HepG2 (cell line): ENCODE measurements at regions of chr16 and their contacts with region 1.

Region 1: GRCh38 chr16:20409398-20410120 is at the start of gene ACSM5:
- DNase-seq: peak; percentile 62
- ATAC-seq: peak; percentile 93
- H3K4me3 ChIP-seq: peak within 1 kb of the TSS; percentile 47 to 51 (median 50)
- H3K27ac ChIP-seq: peak within 1 kb of the TSS; percentile 79
- H3K4me1 ChIP-seq: peaks cover 53% of the 10 kb centered on the region
- H3K27me3 ChIP-seq: no peaks in the 10 kb centered on the region
- CTCF ChIP-seq: no peak
- EP300 ChIP-seq: no peak; a peak in 1 of 4 replicates
- POLR2A ChIP-seq: peak; percentile 41 to 63; a peak in 3 of 4 replicates
- RAD21 ChIP-seq: no peak; the same call in 1 of the 2 replicates
- total RNA-seq, gene ACSM5: 9.1 and 11.1 TPM in 2 replicates

Region 2: DNA sequence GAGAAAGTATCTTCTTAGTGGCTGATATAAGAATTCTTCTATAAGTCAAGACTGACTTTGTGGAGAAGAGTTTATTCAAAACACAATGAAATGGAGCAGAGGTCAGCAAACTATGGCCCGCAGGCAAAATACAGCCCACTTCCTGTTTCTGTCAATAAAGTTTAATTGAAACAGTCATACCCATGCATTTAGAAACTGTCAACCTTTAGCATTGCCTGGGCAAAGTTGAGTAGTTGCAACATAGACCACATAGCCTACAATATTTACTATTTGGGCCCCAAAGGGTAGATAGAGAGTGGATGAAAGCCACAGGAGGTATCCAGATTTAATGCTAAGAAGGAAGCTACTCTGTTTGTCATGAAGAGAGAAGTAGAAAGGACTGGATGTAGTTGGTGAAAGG is 128.6 kb after region 1 on chr16:
- CTCF ChIA-PET with region 1: no interaction called
- POLR2A ChIA-PET with region 1: no interaction called
- in situ Hi-C with region 1: no loop called
- intact Hi-C with region 1: loop called (anchors 10 kb)
- DNase-seq: peak; percentile 63
- ATAC-seq: peak; percentile 82
- H3K4me3 ChIP-seq: no peak overlapping the region
- H3K27ac ChIP-seq: peak overlapping the region; percentile 28
- H3K4me1 ChIP-seq: peaks cover 15% of the 10 kb centered on the region
- H3K27me3 ChIP-seq: no peaks in the 10 kb centered on the region
- CTCF ChIP-seq: no peak
- EP300 ChIP-seq: peak in 1 of 2 experiments; percentile 84; a peak in 2 of 4 replicates
- POLR2A ChIP-seq: no peak
- RAD21 ChIP-seq: no peak

Region 3: DNA sequence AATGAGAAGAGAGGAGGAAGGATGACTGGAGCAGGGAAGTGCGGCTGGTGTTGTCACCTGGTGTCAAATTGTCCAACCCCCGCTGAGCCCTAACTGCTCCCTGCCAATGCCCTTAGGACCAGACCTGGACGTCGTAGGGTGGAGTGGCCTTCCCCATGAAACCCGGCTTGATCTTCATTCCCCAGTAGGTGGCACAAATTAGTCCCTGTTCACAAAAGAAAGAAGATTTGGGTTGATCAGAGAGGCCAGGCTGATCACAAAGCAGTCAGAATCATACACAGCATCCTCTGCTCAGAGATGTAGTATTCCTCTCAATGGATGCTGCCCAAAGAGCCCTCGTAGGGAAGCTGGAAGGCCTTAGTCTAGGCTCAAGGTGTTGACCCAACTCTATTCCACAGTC is 227.7 kb after region 1 on chr16:
- CTCF ChIA-PET with region 1: no interaction called
- POLR2A ChIA-PET with region 1: no interaction called
- in situ Hi-C with region 1: no loop called
- intact Hi-C with region 1: no loop called
- DNase-seq: no peak
- ATAC-seq: peak; percentile 48
- H3K4me3 ChIP-seq: no peak overlapping the region
- H3K27ac ChIP-seq: no peak overlapping the region
- H3K4me1 ChIP-seq: peaks cover 14% of the 10 kb centered on the region
- H3K27me3 ChIP-seq: no peaks in the 10 kb centered on the region; a peak in 1 of 5 replicates
- CTCF ChIP-seq: peak; percentile 29; the same call in 1 of the 2 replicates
- EP300 ChIP-seq: no peak
- POLR2A ChIP-seq: no peak
- RAD21 ChIP-seq: no peak

Region 4: DNA sequence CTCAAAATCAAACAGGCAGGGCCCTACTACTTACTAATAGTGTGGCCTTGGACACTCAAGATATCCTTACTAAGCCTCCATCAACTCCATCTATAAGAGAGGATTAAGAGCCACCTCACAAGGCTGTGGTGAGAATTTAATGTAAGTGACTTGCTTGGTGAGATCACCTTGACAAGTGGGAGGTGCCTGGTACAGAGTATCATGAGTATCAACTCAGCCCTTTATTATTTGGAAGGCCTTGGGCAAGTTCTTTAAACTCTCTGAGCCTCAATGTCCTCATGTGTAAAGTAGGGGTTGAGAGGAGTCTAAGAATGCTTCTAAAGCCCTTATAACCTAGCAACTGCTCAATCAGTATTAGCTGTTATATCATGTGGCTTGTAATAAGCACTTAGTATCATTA is 317.1 kb after region 1 on chr16:
- CTCF ChIA-PET with region 1: no interaction called
- POLR2A ChIA-PET with region 1: no interaction called
- in situ Hi-C with region 1: no loop called
- intact Hi-C with region 1: no loop called
- DNase-seq: no peak
- ATAC-seq: no peak
- H3K4me3 ChIP-seq: no peak overlapping the region
- H3K27ac ChIP-seq: no peak overlapping the region
- H3K4me1 ChIP-seq: no peaks in the 10 kb centered on the region
- H3K27me3 ChIP-seq: no peaks in the 10 kb centered on the region
- CTCF ChIP-seq: no peak
- EP300 ChIP-seq: no peak
- POLR2A ChIP-seq: no peak
- RAD21 ChIP-seq: no peak